ENCODE measurements at regions of chr1 and their contacts with region 1.

Region 1: GRCh38 chr1:156601122-156601830 is at the start of gene GPATCH4:
- DNase-seq: peak; percentile 64 to 92 (median 86)
- H3K4me3 ChIP-seq: peak within 1 kb of the TSS; percentile 58 to 95 (median 76)
- H3K27ac ChIP-seq: peak within 1 kb of the TSS in 58 of 59 donors; percentile 26 to 91 (median 82)
- H3K27me3 ChIP-seq: no peaks in the 10 kb centered on the region
- CTCF ChIP-seq: peak in 34 of 56 donors; percentile 7 to 55 (median 29)
- total RNA-seq, gene GPATCH4: 15.8 to 40.9 (median 28.2) TPM

Region 2: GRCh38 chr1:156490401-156491032 is 110.8 kb before region 1 on chr1:
- intact Hi-C with region 1: loop called (anchors 5 kb)
- DNase-seq: peak in 1 of 10 donors; percentile 62
- H3K4me3 ChIP-seq: peak overlapping the region in 43 of 59 donors; percentile 1 to 49 (median 27)
- H3K27ac ChIP-seq: peak overlapping the region; percentile 51 to 100 (median 99)
- H3K27me3 ChIP-seq: no peaks in the 10 kb centered on the region
- CTCF ChIP-seq: peak in 6 of 56 donors; percentile 6 to 17 (median 10)

Region 3: DNA sequence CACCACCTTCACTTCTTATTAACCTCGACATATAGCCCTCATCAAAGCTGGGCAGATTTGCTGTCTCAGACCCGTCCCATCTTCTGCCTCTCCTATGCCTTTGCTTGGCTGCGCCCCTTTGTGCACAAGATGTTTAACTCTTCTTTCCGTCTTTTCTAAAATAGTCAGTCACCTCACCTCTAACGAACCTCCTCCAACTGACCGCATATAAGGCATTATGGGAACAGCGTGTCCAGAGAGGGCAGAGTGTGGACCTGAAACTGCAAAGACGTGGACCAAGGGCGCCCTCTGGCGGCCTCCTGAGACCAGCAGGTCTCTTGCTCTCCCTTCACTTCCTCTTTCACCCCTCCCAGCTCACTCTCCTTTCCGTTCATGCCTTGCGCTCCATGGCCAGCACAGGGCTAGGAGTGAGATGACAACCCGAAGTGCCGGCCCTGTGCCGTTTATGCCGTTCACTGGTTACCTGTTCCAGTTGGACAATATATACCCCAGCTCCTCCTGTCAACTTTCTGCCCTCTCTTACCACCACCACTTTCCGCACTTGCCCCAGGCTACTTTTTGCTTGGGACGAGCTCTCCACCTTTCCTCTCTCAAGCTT is 124.5 kb after region 1 on chr1:
- intact Hi-C with region 1: no loop called
- DNase-seq: peak; percentile 81 to 92 (median 88)
- H3K4me3 ChIP-seq: peak overlapping the region; percentile 11 to 94 (median 73)
- H3K27ac ChIP-seq: peak overlapping the region in 6 of 59 donors; percentile 3 to 43 (median 29)
- H3K27me3 ChIP-seq: no peaks in the 10 kb centered on the region
- CTCF ChIP-seq: peak; percentile 75 to 99 (median 96)

Measured in dorsolateral prefrontal cortex (tissue), 120 donors.